CD14-positive monocyte (primary cell): ENCODE measurements at regions of chr1 and their contacts with region 1.

Region 1: DNA sequence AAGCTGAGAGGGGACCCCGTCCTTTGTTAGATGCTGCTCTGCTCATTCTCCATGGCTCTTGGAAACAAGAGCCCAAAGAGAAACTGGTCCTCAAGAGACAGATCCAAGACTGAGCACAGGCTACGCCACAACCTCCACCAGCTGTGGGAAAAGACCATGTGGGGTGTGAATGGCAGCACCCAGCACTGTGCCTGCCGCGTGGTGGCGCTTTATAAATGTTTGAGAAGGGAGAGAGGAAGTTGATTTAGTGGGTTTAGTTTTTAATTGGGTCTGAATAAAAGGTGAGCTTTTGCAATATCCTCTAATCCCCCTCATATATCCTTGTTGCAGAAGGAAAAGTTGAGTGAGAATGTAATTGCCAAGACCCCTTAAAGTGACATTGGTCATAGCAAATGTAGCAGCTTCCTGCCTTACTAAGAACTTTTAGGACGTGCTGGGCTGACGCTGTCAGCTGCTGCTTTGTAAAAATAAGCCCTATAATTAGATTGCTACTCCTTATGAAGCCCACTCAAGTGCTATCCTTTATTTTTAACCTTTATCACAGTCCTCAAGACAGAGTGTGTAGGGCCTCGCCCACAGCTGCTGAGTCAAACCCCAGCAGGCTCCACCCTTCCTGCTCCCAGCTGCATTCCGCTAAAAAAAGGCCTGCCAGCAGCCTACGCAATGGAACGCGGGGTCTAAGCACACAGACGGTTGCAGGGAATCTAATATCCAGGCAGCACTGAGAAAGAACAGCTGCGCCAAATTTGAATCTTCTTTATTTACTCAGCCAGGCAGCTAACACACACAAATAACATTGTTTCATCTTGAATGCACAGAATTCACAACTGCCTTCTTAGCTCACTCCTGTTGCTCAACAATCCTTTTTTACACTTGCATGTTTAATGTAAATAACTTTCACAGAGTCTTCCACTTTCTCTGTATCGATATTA is 47.4 kb upstream of the PRDX6 start:
- DNase-seq: peak; percentile 55 to 64 (median 56)
- H3K4me3 ChIP-seq: peak overlapping the region; percentile 23 to 73 (median 52)
- H3K4me3 Mint-ChIP-seq: peak overlapping the region; percentile 62 to 89
- H3K27ac ChIP-seq: peak overlapping the region; percentile 64 to 82
- H3K27ac Mint-ChIP-seq: peak overlapping the region; percentile 79 to 94 (median 88)
- H3K4me1 ChIP-seq: peaks cover 32 to 35% of the 10 kb centered on the region in 2 donors
- H3K4me1 Mint-ChIP-seq: peaks cover 38% of the 10 kb centered on the region
- H3K27me3 ChIP-seq: no peaks in the 10 kb centered on the region
- H3K27me3 Mint-ChIP-seq: peaks cover 0 to 2% (median 0%) of the 10 kb centered on the region in 3 donors
- CTCF ChIP-seq: peak; percentile 68

Region 2: DNA sequence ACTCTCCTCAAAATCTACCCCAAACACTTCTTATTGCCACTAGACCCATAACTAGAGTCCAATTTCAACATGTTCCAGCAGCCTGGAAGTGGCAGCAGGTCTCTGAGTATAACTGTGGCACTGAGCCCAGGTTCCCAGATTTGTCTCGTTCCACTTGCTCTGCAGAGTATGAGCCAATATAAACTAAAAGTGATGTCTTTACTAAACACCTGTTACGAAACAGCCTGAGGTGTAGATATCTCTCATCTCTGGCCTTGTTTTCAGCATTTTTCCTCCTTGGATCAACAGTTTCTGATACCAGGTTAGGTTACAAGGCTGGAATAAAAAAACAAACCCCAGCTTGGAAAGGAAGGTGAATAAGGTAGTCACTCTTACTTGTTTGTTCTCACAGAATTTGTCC is 22.2 kb after region 1 on chr1:
- intact Hi-C with region 1: no loop called
- DNase-seq: no peak
- H3K4me3 ChIP-seq: no peak overlapping the region
- H3K4me3 Mint-ChIP-seq: no peak overlapping the region
- H3K27ac ChIP-seq: no peak overlapping the region
- H3K27ac Mint-ChIP-seq: no peak overlapping the region
- H3K4me1 ChIP-seq: no peaks in the 10 kb centered on the region
- H3K4me1 Mint-ChIP-seq: peaks cover 2% of the 10 kb centered on the region
- H3K27me3 ChIP-seq: no peaks in the 10 kb centered on the region
- H3K27me3 Mint-ChIP-seq: peaks cover 0 to 3% (median 2%) of the 10 kb centered on the region in 3 donors
- CTCF ChIP-seq: no peak

Region 3: DNA sequence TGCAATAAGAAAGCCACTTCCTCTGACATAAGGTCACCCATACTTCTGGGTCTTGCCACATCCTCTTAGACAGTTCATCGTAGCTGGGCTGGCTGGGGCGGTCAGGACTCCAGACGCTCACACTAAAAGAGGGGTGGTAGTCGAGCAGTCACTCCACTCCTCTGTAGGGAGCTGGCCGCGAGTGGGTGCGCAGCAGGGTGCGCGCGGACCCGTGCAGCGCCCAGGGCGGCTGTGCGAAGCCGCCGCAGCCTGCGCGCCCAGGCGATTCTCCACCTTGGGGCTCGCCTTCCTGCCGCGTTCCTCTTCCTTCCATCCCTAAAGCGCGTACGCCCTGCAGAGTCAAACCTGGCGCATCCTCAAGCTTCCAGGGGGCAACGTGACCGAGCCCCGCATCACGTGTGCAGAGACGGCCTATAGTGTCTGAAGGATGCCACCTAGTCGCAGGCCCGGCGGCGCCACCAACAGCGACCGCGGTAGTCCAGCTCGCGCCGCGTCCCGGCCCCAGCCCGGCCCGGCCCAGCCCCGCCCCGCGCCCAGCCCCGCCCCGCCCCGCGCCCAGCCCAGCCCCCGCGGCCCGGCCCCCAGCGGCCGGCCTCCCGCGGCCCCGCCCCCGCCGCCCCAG is 47.0 kb after region 1 on chr1:
- intact Hi-C with region 1: loop called (anchors 5 kb)
- DNase-seq: peak; percentile 84 to 88 (median 87)
- H3K4me3 ChIP-seq: peak overlapping the region; percentile 77 to 92 (median 86)
- H3K4me3 Mint-ChIP-seq: peak overlapping the region; percentile 92 to 93
- H3K27ac ChIP-seq: peak overlapping the region; percentile 84 to 97
- H3K27ac Mint-ChIP-seq: peak overlapping the region; percentile 94 to 98 (median 97)
- H3K4me1 ChIP-seq: peaks cover 37 to 45% of the 10 kb centered on the region in 2 donors
- H3K4me1 Mint-ChIP-seq: peaks cover 52% of the 10 kb centered on the region
- H3K27me3 ChIP-seq: no peaks in the 10 kb centered on the region
- H3K27me3 Mint-ChIP-seq: peaks cover 0 to 4% (median 1%) of the 10 kb centered on the region in 3 donors
- CTCF ChIP-seq: no peak

Region 4: GRCh38 chr1:173714759-173715537 is 285.2 kb after region 1 on chr1 and contains the start of gene KLHL20:
- intact Hi-C with region 1: loop called in 1 of 2 experiments (anchors 10 kb)
- DNase-seq: peak; percentile 78 to 79 (median 78)
- H3K4me3 ChIP-seq: peak within 1 kb of the TSS; percentile 74 to 97 (median 91)
- H3K4me3 Mint-ChIP-seq: peak within 1 kb of the TSS; percentile 94 to 99
- H3K27ac ChIP-seq: peak within 1 kb of the TSS; percentile 88 to 91
- H3K27ac Mint-ChIP-seq: peak within 1 kb of the TSS; percentile 90 to 97 (median 96)
- H3K4me1 ChIP-seq: peaks cover 4 to 17% of the 10 kb centered on the region in 2 donors
- H3K4me1 Mint-ChIP-seq: peaks cover 18% of the 10 kb centered on the region
- H3K27me3 ChIP-seq: peaks cover 14 to 27% of the 10 kb centered on the region in 2 donors
- H3K27me3 Mint-ChIP-seq: peaks cover 7 to 16% (median 12%) of the 10 kb centered on the region in 3 donors
- CTCF ChIP-seq: no peak
- polyA plus RNA-seq, gene KLHL20: 6.5 to 9.4 (median 8.2) TPM